Gastrocnemius medialis (tissue), 4 donors: ENCODE measurements at regions of chr17 and their contacts with region 1.

Region 1: GRCh38 chr17:78250891-78251794 is 19.7 kb downstream of the TMEM235 start:
- DNase-seq: peak; percentile 58 to 77
- ATAC-seq: peak; percentile 67 to 74
- H3K4me3 ChIP-seq: peak overlapping the region in 1 of 4 donors; percentile 4
- H3K27ac ChIP-seq: peak overlapping the region in 1 of 4 donors; percentile 11
- H3K4me1 ChIP-seq: peaks cover 5 to 8% of the 10 kb centered on the region in 2 donors
- H3K27me3 ChIP-seq: no peaks in the 10 kb centered on the region
- CTCF ChIP-seq: peak; percentile 97 to 100 (median 99)
- POLR2A ChIP-seq: no peak

Region 2: GRCh38 chr17:78214706-78215061 is 36.5 kb before region 1 on chr17:
- in situ Hi-C with region 1: no loop called
- intact Hi-C with region 1: loop called (anchors 1 kb)
- DNase-seq: no peak
- ATAC-seq: no peak
- H3K4me3 ChIP-seq: peak overlapping the region in 3 of 4 donors; percentile 59 to 71 (median 67)
- H3K27ac ChIP-seq: no peak overlapping the region
- H3K4me1 ChIP-seq: peaks cover 5% of the 10 kb centered on the region in 2 donors
- H3K27me3 ChIP-seq: no peaks in the 10 kb centered on the region
- CTCF ChIP-seq: no peak
- POLR2A ChIP-seq: no peak